ENCODE measurements at regions of chr3 and their contacts with region 1.

Region 1: DNA sequence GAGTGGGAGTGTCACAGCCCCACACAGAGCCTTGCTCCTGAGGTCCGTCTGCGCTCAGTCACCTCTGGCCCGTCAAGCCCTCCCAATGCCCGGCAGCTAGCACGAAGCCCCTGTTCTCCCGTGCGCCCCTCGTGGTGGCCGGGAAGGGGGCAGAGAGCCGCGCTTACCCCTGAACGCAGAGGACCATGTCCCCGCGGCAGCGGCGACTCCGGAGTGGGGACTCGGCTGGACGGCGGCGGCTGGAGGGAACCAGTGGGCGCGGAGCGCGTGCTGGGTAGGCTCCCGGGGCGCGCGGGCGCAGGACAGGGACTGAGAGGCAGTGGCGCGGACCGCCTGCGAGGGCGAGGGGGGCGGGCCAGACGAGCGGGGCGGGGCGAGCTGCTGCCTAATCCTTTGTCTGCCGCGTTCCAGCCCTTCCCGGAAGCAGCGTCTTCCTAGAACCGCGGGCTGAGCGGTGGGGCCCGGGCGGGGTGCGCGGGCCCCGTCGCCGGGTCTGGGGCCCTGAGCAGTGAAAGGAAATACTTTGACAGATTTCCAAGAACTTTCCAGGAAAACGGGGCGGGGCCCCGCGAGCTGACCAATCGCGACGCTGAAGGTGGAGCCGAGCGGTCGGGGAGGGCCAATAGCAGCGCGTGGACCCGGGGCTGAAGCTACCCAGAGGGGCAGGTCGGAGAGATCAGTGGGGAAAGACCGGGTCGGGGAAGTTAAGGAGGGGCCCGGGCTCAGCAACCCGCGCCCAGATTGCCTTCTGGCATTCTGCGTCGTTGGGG is at the start of gene CISH:
- DNase-seq: peak; percentile 92
- ATAC-seq: peak; percentile 77
- H3K4me3 Mint-ChIP-seq: peak within 1 kb of the TSS; percentile 87
- H3K27ac Mint-ChIP-seq: peak within 1 kb of the TSS; percentile 77
- H3K4me1 Mint-ChIP-seq: peaks cover 38% of the 10 kb centered on the region
- H3K27me3 Mint-ChIP-seq: no peaks in the 10 kb centered on the region
- CTCF ChIP-seq: no peak
- total RNA-seq, gene CISH: 2.9 and 3.2 TPM in 2 replicates

Region 2: DNA sequence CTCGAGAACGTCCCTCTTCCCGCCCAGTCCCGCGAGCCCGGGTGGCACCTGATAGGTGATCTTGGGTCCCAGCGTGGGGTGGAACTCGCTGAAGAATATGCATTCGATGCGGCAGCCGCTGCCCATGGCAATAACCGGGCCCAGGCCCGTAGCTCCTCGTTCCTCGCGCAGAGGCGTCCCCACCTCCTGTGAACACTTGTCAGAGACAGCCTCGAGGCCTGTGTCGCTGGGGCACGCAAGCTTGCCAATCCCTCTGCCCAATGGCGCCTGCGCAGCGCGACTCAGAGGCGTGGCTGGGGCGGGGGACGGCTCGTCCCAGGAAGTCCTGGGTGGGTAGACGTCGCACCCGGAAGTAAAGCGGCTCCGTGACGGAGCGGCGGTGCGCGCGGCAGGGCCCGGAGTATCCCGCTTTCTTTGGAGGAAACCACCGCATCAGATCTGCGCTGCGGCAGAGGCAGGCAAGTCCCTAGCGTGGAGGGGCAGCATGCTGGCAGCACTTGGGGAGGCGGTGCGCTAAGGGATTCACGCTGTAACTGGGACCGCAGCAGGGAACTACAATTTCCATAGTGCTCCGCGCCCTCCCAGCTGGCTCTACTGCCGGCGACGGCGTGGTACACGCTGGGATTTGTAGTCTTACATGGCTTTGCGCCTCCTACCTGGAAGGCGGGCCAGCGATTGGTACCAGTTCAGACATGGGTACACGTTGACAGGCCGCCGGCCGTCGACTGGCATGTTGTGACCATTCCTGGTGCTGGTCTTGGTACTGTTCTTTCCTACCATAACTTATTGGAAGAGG is 260.9 kb before region 1 on chr3 and contains the starts of genes CYB561D2 and NPRL2:
- CTCF ChIA-PET with region 1: interaction called, 4 read pairs
- POLR2A ChIA-PET with region 1: interaction called, 4 read pairs
- intact Hi-C with region 1: loop called (anchors 1 kb)
- DNase-seq: peak; percentile 99
- ATAC-seq: peak; percentile 89
- H3K4me3 Mint-ChIP-seq: peak within 1 kb of the TSS; percentile 97
- H3K27ac Mint-ChIP-seq: peak within 1 kb of the TSS; percentile 99
- H3K4me1 Mint-ChIP-seq: peaks cover 60% of the 10 kb centered on the region
- H3K27me3 Mint-ChIP-seq: no peaks in the 10 kb centered on the region
- CTCF ChIP-seq: no peak
- total RNA-seq, gene CYB561D2: 22.9 and 26.0 TPM in 2 replicates
- total RNA-seq, gene NPRL2: 23.6 and 26.4 TPM in 2 replicates

Region 3: DNA sequence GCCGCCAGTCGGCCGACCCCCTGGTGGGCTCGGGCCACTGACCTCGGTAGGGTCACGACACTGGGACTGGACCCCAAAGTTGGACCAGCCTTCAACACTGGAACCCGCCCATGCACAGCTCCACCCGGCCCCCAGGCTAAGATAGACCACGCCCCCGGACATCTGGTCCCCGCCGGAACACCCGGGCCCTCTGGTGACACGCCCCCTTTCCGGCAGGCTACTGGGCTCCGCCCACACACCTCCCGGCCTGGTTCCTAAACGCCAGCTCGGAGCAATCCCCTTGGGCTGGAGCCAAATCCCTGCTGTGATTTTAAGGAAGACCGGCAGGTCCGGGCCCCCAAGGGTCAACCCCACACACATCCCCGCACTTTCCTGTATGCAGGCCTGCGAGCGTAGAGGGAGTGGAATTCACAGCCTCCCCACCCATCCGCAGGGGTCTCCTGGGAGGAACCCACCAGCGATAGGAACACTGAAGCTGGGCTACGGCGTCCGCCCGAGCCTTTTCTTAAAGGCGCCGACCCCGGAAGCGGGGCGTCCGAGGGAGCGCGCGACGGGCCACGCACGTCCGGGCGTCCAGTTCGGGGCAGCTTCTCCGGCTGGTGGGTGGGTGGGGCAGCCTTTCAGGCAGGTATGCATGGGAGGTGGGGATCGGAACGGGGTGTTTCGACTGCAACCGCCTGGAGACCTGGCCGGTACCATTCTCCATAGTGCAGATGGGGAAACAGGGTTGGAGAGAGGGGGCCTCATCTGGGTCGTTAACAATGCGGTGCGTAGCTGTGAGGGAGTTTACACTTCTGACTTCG is 42.5 kb before region 1 on chr3 and contains the start of gene HEMK1:
- CTCF ChIA-PET with region 1: interaction called, 245 read pairs
- POLR2A ChIA-PET with region 1: interaction called, 125 read pairs
- intact Hi-C with region 1: loop called (anchors 1 kb)
- DNase-seq: peak; percentile 90
- ATAC-seq: peak; percentile 74
- H3K4me3 Mint-ChIP-seq: peak within 1 kb of the TSS; percentile 97
- H3K27ac Mint-ChIP-seq: peak within 1 kb of the TSS; percentile 93
- H3K4me1 Mint-ChIP-seq: peaks cover 34% of the 10 kb centered on the region
- H3K27me3 Mint-ChIP-seq: no peaks in the 10 kb centered on the region
- CTCF ChIP-seq: no peak
- total RNA-seq, gene HEMK1: 23.5 and 26.9 TPM in 2 replicates

Region 4: GRCh38 chr3:50652709-50653108 is 41.1 kb after region 1 on chr3:
- CTCF ChIA-PET with region 1: interaction called, 60 read pairs
- POLR2A ChIA-PET with region 1: interaction called, 5 read pairs
- intact Hi-C with region 1: loop called (anchors 1 kb)
- DNase-seq: peak; percentile 33
- ATAC-seq: peak; percentile 60
- H3K4me3 Mint-ChIP-seq: no peak overlapping the region
- H3K27ac Mint-ChIP-seq: no peak overlapping the region
- H3K4me1 Mint-ChIP-seq: no peaks in the 10 kb centered on the region
- H3K27me3 Mint-ChIP-seq: peaks cover 1% of the 10 kb centered on the region
- CTCF ChIP-seq: no peak

Region 5: GRCh38 chr3:51384726-51385473 is 773.3 kb after region 1 on chr3 and contains the start of gene MANF:
- CTCF ChIA-PET with region 1: interaction called, 11 read pairs
- POLR2A ChIA-PET with region 1: interaction called, 22 read pairs
- intact Hi-C with region 1: loop called (anchors 1 kb)
- DNase-seq: peak; percentile 89
- ATAC-seq: peak; percentile 95
- H3K4me3 Mint-ChIP-seq: peak within 1 kb of the TSS; percentile 99
- H3K27ac Mint-ChIP-seq: peak within 1 kb of the TSS; percentile 98
- H3K4me1 Mint-ChIP-seq: peaks cover 49% of the 10 kb centered on the region
- H3K27me3 Mint-ChIP-seq: no peaks in the 10 kb centered on the region
- CTCF ChIP-seq: no peak
- total RNA-seq, gene MANF: 64.2 and 66.1 TPM in 2 replicates

Region 6: DNA sequence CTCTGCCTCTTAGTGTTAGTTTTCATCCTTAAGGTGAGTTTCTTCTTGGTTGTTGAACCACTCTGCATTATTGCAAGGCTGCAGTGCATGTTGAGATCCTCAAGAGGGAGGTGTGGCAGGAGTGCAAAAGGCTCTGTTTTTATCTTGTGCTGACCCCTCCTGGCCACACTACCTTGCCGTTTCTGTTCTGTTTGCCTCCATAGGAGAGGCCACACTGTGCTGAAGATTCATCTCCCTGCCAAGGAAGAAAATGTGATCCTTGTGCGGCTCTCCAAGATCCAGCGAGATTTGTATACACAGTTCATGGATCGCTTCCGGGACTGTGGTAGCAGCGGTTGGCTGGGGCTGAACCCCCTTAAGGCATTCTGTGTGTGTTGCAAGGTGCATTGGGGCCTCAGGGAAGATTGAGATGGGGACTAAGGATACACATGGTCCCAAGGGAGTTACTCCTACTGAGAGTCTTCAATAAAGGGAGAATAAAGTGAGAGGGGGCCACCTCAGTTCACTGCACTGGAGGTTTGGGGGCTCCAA is 1026.4 kb after region 1 on chr3:
- CTCF ChIA-PET with region 1: no interaction called
- POLR2A ChIA-PET with region 1: no interaction called
- intact Hi-C with region 1: loop called (anchors 1 kb)
- DNase-seq: no peak
- ATAC-seq: peak; percentile 90
- H3K4me3 Mint-ChIP-seq: no peak overlapping the region
- H3K27ac Mint-ChIP-seq: no peak overlapping the region
- H3K4me1 Mint-ChIP-seq: no peaks in the 10 kb centered on the region
- H3K27me3 Mint-ChIP-seq: no peaks in the 10 kb centered on the region
- CTCF ChIP-seq: no peak

Region 7: DNA sequence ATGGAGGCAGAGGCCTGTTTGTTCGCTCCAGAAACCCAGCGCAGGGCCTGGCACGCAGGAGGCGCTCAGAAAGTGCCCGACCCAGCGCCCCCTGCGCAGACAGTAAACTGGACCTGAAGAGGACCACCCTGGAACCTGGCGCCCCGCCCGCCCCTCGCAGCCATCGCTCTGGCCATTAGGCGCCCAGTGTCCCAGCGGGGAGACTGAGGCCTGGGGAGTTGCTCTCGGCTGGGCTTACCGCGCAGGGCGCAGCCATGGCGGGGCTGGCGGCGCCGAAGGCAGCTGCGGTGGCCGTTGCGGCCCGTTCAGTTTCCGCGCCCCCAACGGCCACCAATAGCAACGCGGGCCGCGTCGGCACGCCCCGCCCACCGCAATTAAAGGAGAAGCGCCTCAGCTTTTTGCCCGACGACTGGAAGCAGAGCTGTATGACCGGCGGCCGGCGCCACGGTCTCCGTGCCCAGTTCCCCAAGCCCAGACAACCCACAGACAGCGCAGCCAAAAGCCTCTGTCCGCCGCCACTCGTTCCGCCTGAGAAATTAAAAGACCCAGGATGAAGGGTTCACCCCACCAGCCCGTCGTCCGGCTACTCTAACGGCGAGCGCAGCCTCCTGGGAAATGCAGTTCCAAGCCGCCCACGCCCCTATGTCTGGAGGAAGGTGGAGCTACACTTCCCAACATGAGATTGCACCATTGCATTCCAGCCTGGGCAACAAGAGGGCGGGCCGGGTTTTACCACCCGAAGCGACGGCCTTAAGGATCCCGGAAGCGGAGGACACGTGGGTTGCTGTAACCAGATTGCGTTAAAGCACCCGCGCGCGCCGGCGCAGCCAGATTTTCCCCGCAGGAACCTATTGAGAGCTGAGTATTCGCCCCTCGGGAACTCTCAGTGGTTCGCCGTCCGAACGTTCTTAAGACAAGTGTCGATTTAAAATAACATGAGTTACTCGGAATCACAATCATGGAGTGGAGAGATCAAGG is 1542.8 kb after region 1 on chr3 and contains the start of gene POC1A:
- CTCF ChIA-PET with region 1: interaction called, 3 read pairs
- POLR2A ChIA-PET with region 1: no interaction called
- intact Hi-C with region 1: loop called (anchors 5 kb)
- DNase-seq: peak; percentile 84
- ATAC-seq: peak; percentile 87
- H3K4me3 Mint-ChIP-seq: peak within 1 kb of the TSS; percentile 96
- H3K27ac Mint-ChIP-seq: peak within 1 kb of the TSS; percentile 97
- H3K4me1 Mint-ChIP-seq: peaks cover 13% of the 10 kb centered on the region
- H3K27me3 Mint-ChIP-seq: no peaks in the 10 kb centered on the region
- CTCF ChIP-seq: no peak
- total RNA-seq, gene POC1A: 2.3 and 2.4 TPM in 2 replicates